ENCODE measurements at regions of chr13 and their contacts with region 1.

Region 1: DNA sequence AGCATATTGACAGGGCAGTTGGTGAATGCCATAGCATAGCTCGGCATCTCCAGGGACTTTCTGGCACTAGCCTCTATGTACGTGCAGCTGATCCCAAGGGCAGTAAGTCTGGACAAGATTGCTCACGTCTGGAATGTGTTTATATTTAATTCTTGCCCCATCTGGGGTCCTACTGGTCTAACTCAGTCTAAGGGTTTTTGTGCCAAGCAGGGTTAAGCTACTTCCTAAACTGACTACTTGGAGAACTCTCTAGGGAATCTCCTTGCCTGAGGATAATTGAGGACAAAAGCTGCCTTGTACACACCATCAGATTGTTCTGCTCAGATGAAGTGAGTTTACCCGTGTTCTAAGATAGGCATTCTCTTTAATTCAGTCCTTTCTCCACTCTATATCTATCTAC is 358.1 kb downstream of the MYO16 start:
- DNase-seq: no peak
- H3K4me3 ChIP-seq: no peak overlapping the region
- H3K27ac ChIP-seq: no peak overlapping the region
- H3K4me1 ChIP-seq: no peaks in the 10 kb centered on the region
- H3K27me3 ChIP-seq: no peaks in the 10 kb centered on the region
- CTCF ChIP-seq: no peak

Region 2: DNA sequence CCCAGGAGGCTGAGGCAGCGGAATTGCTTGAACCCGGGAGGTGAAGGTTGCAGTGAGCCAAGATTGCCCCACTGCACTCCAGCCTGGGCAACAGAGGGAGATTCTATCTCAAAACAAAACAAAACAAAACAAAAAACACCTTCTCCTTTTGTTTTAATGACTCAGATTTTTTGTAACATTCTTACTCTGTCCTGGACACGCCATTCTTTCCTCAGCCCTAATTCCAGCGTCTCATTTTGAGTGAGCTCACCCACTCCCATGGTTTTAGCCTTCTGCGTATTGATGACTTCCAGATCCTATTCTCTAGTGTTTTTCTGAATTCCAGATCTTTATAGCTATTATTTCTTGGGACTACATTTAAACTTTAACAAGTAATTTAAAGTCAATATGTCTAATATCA is 31.8 kb before region 1 on chr13:
- CTCF ChIA-PET with region 1: no interaction called
- POLR2A ChIA-PET with region 1: interaction called, 16 read pairs
- intact Hi-C with region 1: no loop called
- DNase-seq: no peak
- H3K4me3 ChIP-seq: no peak overlapping the region
- H3K27ac ChIP-seq: no peak overlapping the region
- H3K4me1 ChIP-seq: peaks cover 32% of the 10 kb centered on the region
- H3K27me3 ChIP-seq: no peaks in the 10 kb centered on the region
- CTCF ChIP-seq: no peak

Region 3: GRCh38 chr13:109072505-109072904 is 85.0 kb after region 1 on chr13:
- CTCF ChIA-PET with region 1: no interaction called
- POLR2A ChIA-PET with region 1: no interaction called
- intact Hi-C with region 1: no loop called
- DNase-seq: no peak
- H3K4me3 ChIP-seq: no peak overlapping the region
- H3K27ac ChIP-seq: no peak overlapping the region
- H3K4me1 ChIP-seq: no peaks in the 10 kb centered on the region
- H3K27me3 ChIP-seq: no peaks in the 10 kb centered on the region
- CTCF ChIP-seq: no peak

Region 4: GRCh38 chr13:109243311-109243951 is 255.9 kb after region 1 on chr13:
- CTCF ChIA-PET with region 1: no interaction called
- POLR2A ChIA-PET with region 1: no interaction called
- intact Hi-C with region 1: no loop called
- DNase-seq: peak; percentile 75 to 96
- H3K4me3 ChIP-seq: peak overlapping the region; percentile 22; the same call in 1 of the 2 replicates
- H3K27ac ChIP-seq: peak overlapping the region; percentile 92
- H3K4me1 ChIP-seq: peaks cover 39% of the 10 kb centered on the region
- H3K27me3 ChIP-seq: no peaks in the 10 kb centered on the region
- CTCF ChIP-seq: no peak

Measured in PC-9 (cell line).